CD14-positive monocyte (primary cell): ENCODE measurements at regions of chr1 and their contacts with region 1.

Region 1: GRCh38 chr1:100921109-100921706 is 25.3 kb downstream of the SLC30A7 start:
- DNase-seq: peak; percentile 23 to 67 (median 44)
- H3K4me3 ChIP-seq: no peak overlapping the region
- H3K4me3 Mint-ChIP-seq: no peak overlapping the region
- H3K27ac ChIP-seq: no peak overlapping the region
- H3K27ac Mint-ChIP-seq: no peak overlapping the region
- H3K4me1 ChIP-seq: no peaks in the 10 kb centered on the region
- H3K4me1 Mint-ChIP-seq: no peaks in the 10 kb centered on the region
- H3K27me3 ChIP-seq: no peaks in the 10 kb centered on the region
- H3K27me3 Mint-ChIP-seq: no peaks in the 10 kb centered on the region
- CTCF ChIP-seq: peak; percentile 77

Region 2: DNA sequence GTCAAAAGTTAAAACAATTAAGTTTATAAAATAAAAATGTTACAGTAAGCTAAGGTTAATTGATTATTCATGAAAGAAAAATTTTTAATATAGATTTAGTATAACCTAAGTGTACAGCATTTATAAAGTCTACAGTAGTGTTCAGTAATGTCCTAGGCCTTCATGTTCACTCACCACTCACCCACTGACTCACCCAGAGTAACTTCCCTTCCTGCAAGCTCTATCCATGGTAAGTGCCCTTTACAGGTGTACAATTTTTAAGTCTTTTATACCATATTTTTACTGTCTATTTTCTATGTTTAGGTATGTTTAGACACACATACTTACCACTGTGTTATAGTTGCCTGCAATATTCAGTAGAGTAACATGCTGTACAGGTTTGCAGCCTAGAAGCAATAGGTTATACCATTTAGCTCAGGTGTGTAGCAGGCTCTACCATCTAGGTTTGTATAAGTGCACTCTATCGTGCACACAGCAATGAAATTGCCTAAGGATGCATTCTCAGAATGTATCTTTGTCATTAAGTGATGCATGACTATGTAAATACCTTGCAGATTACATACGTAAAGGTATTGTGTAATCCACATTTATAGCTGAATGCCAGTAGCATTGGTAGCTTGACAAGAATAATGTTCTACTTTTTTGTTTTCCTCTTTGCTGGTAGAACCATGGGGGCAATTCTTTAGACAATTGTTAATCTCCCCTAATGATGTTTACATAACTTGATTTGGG is 419.0 kb before region 1 on chr1:
- intact Hi-C with region 1: no loop called
- DNase-seq: no peak
- H3K4me3 ChIP-seq: no peak overlapping the region
- H3K4me3 Mint-ChIP-seq: no peak overlapping the region
- H3K27ac ChIP-seq: no peak overlapping the region
- H3K27ac Mint-ChIP-seq: peak overlapping the region in 1 of 7 donors; percentile 77
- H3K4me1 ChIP-seq: peaks cover 0 to 10% of the 10 kb centered on the region in 2 donors
- H3K4me1 Mint-ChIP-seq: peaks cover 12% of the 10 kb centered on the region
- H3K27me3 ChIP-seq: no peaks in the 10 kb centered on the region
- H3K27me3 Mint-ChIP-seq: peaks cover 0 to under 1% (median 0%) of the 10 kb centered on the region in 3 donors
- CTCF ChIP-seq: no peak

Region 3: DNA sequence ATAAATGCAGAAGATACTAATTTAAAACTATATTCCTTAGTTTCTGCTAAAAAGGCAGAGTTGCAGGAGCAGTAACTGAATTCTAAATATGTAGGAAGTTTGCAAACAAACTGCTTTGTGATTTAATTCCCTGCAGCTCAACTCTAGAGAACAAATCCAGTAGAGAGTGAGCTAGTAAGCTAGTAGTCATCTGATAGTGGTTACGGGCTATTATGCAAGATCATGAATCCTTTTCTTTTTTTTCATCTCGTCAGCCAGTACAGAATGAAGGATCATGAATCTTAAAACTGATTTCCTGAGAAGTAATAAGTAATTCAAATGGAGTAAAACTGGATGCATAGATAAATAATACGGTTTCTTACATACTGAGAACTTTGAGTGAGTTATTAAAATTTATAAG is 101.1 kb after region 1 on chr1:
- intact Hi-C with region 1: no loop called
- DNase-seq: peak in 2 of 3 donors; percentile 33 to 45
- H3K4me3 ChIP-seq: no peak overlapping the region
- H3K4me3 Mint-ChIP-seq: no peak overlapping the region
- H3K27ac ChIP-seq: peak overlapping the region in 1 of 2 donors; percentile 32
- H3K27ac Mint-ChIP-seq: peak overlapping the region in 1 of 7 donors; percentile 27
- H3K4me1 ChIP-seq: peaks cover 31 to 43% of the 10 kb centered on the region in 2 donors
- H3K4me1 Mint-ChIP-seq: peaks cover 45% of the 10 kb centered on the region
- H3K27me3 ChIP-seq: no peaks in the 10 kb centered on the region
- H3K27me3 Mint-ChIP-seq: no peaks in the 10 kb centered on the region
- CTCF ChIP-seq: no peak

Region 4: DNA sequence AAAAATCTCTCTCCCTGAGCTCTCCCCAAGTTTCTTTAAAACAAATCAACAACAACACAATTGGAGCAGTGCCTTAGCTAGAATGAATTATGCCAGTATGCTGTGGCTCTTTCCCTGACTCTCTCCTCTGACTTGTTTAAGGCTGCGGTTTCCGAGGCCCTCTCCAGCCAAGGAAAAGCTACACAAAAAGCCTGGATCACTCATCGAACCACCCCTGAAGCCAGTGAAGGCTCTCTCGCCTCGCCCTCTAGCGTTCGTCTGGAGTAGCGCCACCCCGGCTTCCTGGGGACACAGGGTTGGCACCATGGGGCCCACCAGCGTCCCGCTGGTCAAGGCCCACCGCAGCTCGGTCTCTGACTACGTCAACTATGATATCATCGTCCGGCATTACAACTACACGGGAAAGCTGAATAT is 317.5 kb after region 1 on chr1:
- intact Hi-C with region 1: loop called in 1 of 2 experiments (anchors 5 kb)
- DNase-seq: peak; percentile 59 to 78 (median 73)
- H3K4me3 ChIP-seq: peak overlapping the region in 1 of 3 experiments; percentile 49
- H3K4me3 Mint-ChIP-seq: peak overlapping the region; percentile 73 to 99
- H3K27ac ChIP-seq: no peak overlapping the region
- H3K27ac Mint-ChIP-seq: peak overlapping the region in 3 of 7 donors; percentile 68 to 79 (median 69)
- H3K4me1 ChIP-seq: peaks cover 27 to 37% of the 10 kb centered on the region in 2 donors
- H3K4me1 Mint-ChIP-seq: peaks cover 36% of the 10 kb centered on the region
- H3K27me3 ChIP-seq: peaks cover 16 to 40% of the 10 kb centered on the region in 2 donors
- H3K27me3 Mint-ChIP-seq: peaks cover 44 to 55% (median 49%) of the 10 kb centered on the region in 3 donors
- CTCF ChIP-seq: peak; percentile 98

Region 5: DNA sequence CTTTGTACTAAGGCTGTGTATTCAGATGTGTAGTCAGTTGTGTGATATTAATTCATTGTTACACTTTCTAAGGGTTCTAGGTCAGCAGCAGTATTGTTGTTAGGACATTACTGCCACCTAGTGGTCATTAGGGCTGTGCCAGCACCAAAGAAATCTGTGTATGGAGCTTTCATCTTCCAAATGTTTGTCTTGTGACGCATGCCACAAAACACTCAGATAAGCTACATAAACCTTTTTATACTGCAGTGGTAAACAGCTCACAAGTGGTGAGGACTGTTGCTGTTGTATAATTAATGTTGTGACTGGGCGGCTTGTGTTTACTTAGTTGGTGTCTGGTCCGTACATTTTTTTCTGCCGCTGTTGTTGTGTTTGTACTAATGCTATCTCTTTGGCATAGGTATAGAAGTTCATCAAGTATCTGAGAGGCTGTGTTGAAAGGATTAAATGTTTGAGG is 367.3 kb after region 1 on chr1:
- intact Hi-C with region 1: loop called in 1 of 2 experiments (anchors 5 kb)
- DNase-seq: peak; percentile 58 to 78 (median 67)
- H3K4me3 ChIP-seq: no peak overlapping the region
- H3K4me3 Mint-ChIP-seq: no peak overlapping the region
- H3K27ac ChIP-seq: no peak overlapping the region
- H3K27ac Mint-ChIP-seq: no peak overlapping the region
- H3K4me1 ChIP-seq: peaks cover 28 to 32% of the 10 kb centered on the region in 2 donors
- H3K4me1 Mint-ChIP-seq: peaks cover 31% of the 10 kb centered on the region
- H3K27me3 ChIP-seq: no peaks in the 10 kb centered on the region
- H3K27me3 Mint-ChIP-seq: no peaks in the 10 kb centered on the region
- CTCF ChIP-seq: peak; percentile 92

Region 6: DNA sequence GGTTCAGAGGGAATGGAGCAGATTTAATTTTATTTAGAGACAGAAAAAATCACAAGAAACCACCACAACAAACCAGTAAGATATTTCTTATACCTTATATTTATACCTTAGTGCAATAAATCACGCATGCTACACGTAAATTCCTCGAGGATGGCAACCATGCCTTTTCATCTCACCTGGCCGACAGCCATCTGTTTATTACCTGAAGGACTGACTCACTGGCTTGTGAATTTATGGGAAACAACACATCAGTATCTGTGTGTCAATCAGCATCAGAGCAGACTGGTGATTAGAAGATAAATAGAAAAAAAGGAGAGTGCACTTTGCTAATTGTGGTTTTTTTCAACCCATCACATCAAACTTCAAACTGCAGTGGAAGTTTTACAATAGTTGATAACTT is 374.0 kb after region 1 on chr1:
- intact Hi-C with region 1: loop called (anchors 5 kb)
- DNase-seq: no peak
- H3K4me3 ChIP-seq: no peak overlapping the region
- H3K4me3 Mint-ChIP-seq: no peak overlapping the region
- H3K27ac ChIP-seq: no peak overlapping the region
- H3K27ac Mint-ChIP-seq: no peak overlapping the region
- H3K4me1 ChIP-seq: peaks cover 27 to 36% of the 10 kb centered on the region in 2 donors
- H3K4me1 Mint-ChIP-seq: peaks cover 30% of the 10 kb centered on the region
- H3K27me3 ChIP-seq: no peaks in the 10 kb centered on the region
- H3K27me3 Mint-ChIP-seq: peaks cover 0 to 2% (median 0%) of the 10 kb centered on the region in 3 donors
- CTCF ChIP-seq: no peak

Region 7: GRCh38 chr1:101357444-101357986 is 436.3 kb after region 1 on chr1:
- intact Hi-C with region 1: loop called (anchors 5 kb)
- DNase-seq: peak; percentile 55 to 73 (median 67)
- H3K4me3 ChIP-seq: no peak overlapping the region
- H3K4me3 Mint-ChIP-seq: no peak overlapping the region
- H3K27ac ChIP-seq: no peak overlapping the region
- H3K27ac Mint-ChIP-seq: no peak overlapping the region
- H3K4me1 ChIP-seq: no peaks in the 10 kb centered on the region
- H3K4me1 Mint-ChIP-seq: peaks cover 2% of the 10 kb centered on the region
- H3K27me3 ChIP-seq: no peaks in the 10 kb centered on the region
- H3K27me3 Mint-ChIP-seq: peaks cover 0 to 2% (median 0%) of the 10 kb centered on the region in 3 donors
- CTCF ChIP-seq: peak; percentile 81